Activated CD4-positive, alpha-beta memory T cell treated with anti-CD3 and anti-CD28 coated beads for 36 hours (primary cell): ENCODE measurements at regions of chr3 and their contacts with region 1.

Region 1: GRCh38 chr3:69051756-69052471 is at the start of gene TMF1:
- DNase-seq: peak; percentile 99
- H3K4me3 Mint-ChIP-seq: peak within 1 kb of the TSS; percentile 98
- H3K27ac Mint-ChIP-seq: peak within 1 kb of the TSS; percentile 97
- H3K4me1 Mint-ChIP-seq: peaks cover 33% of the 10 kb centered on the region
- H3K27me3 Mint-ChIP-seq: peaks cover 2% of the 10 kb centered on the region
- total RNA-seq, gene TMF1: 37.1 to 42.1 TPM

Region 2: DNA sequence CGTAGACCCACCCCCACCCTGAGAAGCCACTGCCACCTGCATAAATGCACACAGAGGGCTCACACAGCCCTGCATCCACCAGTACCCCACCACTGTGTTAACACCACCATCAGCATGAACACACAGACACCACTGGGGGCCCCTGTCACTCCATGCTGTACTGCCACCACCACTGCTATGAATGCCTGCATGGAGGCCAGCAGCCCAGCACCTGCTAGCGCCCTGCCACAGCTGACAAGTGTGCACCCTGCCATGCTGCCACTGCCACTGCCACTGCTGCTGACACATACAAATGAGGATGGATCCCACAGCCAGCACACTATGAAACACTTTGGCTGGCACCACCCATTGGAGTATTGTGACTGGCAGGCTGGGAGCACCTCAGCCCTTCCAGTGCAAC is 480.6 kb before region 1 on chr3:
- CTCF ChIA-PET with region 1: no interaction called
- POLR2A ChIA-PET with region 1: no interaction called
- intact Hi-C with region 1: no loop called
- DNase-seq: no peak
- H3K4me3 Mint-ChIP-seq: no peak overlapping the region
- H3K27ac Mint-ChIP-seq: no peak overlapping the region
- H3K4me1 Mint-ChIP-seq: no peaks in the 10 kb centered on the region
- H3K27me3 Mint-ChIP-seq: peaks cover 6% of the 10 kb centered on the region

Region 3: GRCh38 chr3:69033470-69033869 is 18.4 kb before region 1 on chr3:
- CTCF ChIA-PET with region 1: no interaction called
- POLR2A ChIA-PET with region 1: interaction called, 3 read pairs
- intact Hi-C with region 1: loop called (anchors 2 kb)
- DNase-seq: peak; percentile 30
- H3K4me3 Mint-ChIP-seq: no peak overlapping the region
- H3K27ac Mint-ChIP-seq: peak overlapping the region; percentile 65
- H3K4me1 Mint-ChIP-seq: peaks cover 16% of the 10 kb centered on the region
- H3K27me3 Mint-ChIP-seq: no peaks in the 10 kb centered on the region

Region 4: DNA sequence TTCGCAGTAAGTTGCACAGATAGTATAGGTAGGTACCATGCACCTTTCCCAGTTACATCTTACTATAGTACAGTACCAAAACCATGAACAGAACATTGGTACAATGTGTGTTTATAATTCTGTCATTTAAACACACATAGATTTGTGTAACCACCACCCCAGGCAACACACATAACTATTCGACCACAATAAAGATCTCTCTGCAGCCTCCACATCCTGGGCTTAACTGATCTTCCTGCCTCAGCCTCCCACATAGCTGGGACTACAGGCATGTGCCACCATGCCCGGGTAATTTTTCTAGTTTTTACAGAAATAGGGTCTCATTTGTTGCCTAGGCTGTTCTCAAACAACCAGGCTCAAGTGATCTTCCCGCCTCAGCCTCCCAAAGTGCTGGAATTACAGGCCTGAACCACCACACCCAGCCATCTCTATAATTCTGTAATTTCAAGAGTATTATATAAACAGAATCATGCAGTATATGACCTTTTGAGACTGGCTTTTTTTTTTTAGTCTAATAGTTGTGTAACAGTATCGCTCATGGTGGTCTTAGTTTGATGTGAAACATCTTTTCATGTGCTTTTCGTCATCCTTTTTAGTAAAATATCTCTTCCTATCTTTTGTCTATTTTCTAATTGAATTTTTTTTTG is 13.5 kb after region 1 on chr3:
- CTCF ChIA-PET with region 1: interaction called, 13 read pairs
- POLR2A ChIA-PET with region 1: interaction called, 3 read pairs
- intact Hi-C with region 1: no loop called
- DNase-seq: peak; percentile 50
- H3K4me3 Mint-ChIP-seq: peak overlapping the region; percentile 23
- H3K27ac Mint-ChIP-seq: peak overlapping the region; percentile 76
- H3K4me1 Mint-ChIP-seq: peaks cover 40% of the 10 kb centered on the region
- H3K27me3 Mint-ChIP-seq: no peaks in the 10 kb centered on the region